ENCODE measurements at regions of chr7 and their contacts with region 1.

Region 1: DNA sequence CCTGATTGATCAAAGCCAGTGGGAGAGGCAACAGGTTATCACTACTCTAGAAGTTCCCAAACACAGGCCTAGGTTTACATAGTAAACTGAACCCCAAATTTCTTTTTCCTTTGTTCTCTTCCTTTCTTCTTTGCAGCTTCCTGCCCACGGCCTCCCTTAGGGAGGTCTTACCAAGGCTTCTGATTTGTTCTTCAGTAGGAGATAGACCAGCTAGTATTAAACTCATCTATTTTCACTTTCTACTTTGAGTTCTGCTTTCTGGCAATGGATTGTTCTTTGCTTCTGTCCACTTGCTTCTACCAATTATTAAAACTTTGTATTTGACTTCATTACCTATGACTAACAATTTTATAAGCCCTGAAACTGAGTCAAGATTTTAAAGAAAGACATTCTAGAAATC is 251.2 kb upstream of the FZD1 start:
- DNase-seq: no peak
- H3K4me3 ChIP-seq: no peak overlapping the region
- H3K27ac ChIP-seq: no peak overlapping the region
- H3K4me1 ChIP-seq: no peaks in the 10 kb centered on the region
- H3K27me3 ChIP-seq: no peaks in the 10 kb centered on the region
- CTCF ChIP-seq: no peak

Region 2: DNA sequence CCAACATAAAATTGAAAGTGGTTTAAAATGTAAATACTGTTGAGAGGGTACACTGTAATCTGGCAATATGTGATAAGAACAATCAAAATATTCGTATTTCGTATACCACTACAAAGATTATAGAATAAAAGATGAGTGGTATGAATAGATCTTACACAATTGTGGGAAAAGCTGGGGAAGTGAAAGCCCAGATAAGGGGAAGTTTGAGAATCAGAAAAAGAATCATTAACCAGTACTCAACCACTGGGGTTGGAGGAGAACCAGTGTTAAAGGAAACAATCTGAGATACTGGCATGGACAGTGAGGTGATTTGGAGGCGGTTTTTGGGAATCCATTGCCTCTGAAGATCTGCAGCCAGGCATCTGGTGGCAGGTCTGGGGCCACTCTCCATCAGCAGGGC is 476.6 kb before region 1 on chr7:
- CTCF ChIA-PET with region 1: interaction called, 17 read pairs
- POLR2A ChIA-PET with region 1: no interaction called
- intact Hi-C with region 1: no loop called
- DNase-seq: no peak
- H3K4me3 ChIP-seq: no peak overlapping the region
- H3K27ac ChIP-seq: no peak overlapping the region
- H3K4me1 ChIP-seq: no peaks in the 10 kb centered on the region
- H3K27me3 ChIP-seq: no peaks in the 10 kb centered on the region
- CTCF ChIP-seq: no peak

Measured in A673 (cell line).